BJ (cell line): ENCODE measurements at regions of chr7 and their contacts with region 1.

Region 1: GRCh38 chr7:51029701-51030191 is 247.1 kb upstream of the GRB10 start:
- DNase-seq: peak; percentile 71
- H3K4me3 ChIP-seq: no peak overlapping the region
- H3K27me3 ChIP-seq: no peaks in the 10 kb centered on the region
- CTCF ChIP-seq: no peak

Region 2: DNA sequence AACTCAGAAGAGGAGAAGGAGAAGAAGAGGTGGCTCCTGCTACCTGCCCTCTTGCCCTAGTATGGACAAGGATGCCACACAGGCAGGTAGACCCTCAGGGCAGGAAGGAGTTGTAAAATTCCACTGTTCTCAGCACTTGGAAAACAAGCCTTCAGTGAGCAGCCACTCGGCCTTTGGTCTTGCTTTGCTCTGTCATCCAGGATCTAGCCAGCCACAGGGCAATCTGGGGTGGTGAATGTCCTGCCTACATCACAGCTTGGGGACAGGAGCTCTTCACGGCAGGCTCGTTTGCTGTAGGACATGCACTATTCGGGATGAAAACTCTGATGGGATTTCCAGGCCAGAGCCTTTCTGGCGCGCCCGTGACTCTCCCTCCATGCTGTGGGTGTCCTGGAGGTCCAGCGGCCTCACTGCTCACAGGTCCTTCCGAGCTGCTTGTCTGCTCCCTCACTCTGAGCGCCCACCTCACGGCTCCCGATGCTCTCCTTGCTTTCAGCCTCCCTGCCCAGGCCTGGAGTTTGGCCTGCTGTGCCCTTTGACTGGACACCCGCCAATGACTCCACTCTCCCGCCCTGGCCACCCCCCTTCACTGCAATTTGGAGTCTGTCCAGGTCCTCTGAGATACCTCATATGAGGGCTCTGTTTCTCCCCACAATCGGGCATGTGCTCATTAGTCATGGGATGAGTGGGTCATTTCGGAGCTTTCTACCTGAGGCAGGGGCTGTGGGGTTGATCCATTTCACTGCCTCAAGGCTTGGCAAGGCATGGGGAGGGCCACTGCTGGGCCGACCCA is 19.8 kb before region 1 on chr7:
- CTCF ChIA-PET with region 1: interaction called, 3 read pairs
- POLR2A ChIA-PET with region 1: interaction called, 14 read pairs
- DNase-seq: no peak
- H3K4me3 ChIP-seq: no peak overlapping the region
- H3K27me3 ChIP-seq: peaks cover 7% of the 10 kb centered on the region
- CTCF ChIP-seq: no peak